ENCODE measurements at regions of chr1 and their contacts with region 1.

Region 1: DNA sequence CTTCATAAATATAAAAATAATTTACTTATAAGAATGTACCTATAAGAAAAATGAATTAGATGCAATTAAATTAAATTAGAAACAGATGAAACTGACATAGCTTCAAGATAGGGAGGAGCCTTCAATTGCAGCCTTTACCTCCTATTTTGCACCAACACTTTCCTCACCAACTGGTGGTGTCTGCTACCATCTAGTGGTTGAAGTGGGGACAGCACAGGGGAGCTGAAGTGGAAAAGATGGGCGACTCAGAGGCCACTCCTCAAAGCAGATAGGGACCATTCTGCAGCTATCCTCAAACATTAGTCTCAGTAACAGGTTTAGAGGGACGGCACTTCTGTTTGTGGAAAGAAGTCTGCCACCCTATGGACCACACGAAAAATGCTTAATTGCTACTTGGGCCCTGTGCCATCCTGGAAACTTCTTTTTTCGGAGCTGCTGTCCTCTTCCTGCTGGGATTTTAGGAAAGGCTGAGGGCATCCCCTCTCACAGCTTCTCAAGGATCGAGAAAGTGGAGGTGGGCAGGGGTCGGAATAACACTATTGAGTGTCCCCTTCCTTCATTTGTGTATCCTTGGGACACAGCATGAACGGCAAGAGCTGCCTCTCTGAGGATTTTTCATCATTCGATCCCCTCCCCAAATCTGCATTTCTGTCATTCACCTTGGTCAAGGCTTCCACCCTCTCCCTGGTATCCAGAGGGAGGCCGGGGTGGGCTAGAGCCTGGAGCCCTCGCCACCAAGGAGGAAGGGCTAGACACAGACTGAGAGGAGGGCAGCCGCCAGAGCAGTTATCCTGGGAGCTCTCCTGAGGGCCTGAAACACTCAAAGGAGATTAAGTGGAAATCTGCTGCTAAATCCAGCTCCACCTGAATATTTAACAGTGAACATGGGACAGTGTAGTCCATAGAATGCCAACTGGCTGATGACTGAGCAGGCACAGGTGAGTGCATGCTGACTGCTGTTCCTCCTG is 9.6 kb downstream of the PROK1 start:
- DNase-seq: peak; percentile 90
- ATAC-seq: peak; percentile 100
- H3K4me3 Mint-ChIP-seq: no peak overlapping the region
- H3K27ac Mint-ChIP-seq: no peak overlapping the region
- H3K4me1 Mint-ChIP-seq: no peaks in the 10 kb centered on the region
- H3K27me3 Mint-ChIP-seq: no peaks in the 10 kb centered on the region
- CTCF ChIP-seq: peak; percentile 89

Region 2: GRCh38 chr1:109370712-109371455 is 1089.7 kb before region 1 on chr1:
- CTCF ChIA-PET with region 1: no interaction called
- POLR2A ChIA-PET with region 1: no interaction called
- intact Hi-C with region 1: no loop called
- DNase-seq: no peak
- ATAC-seq: peak; percentile 31
- H3K4me3 Mint-ChIP-seq: no peak overlapping the region
- H3K27ac Mint-ChIP-seq: no peak overlapping the region
- H3K4me1 Mint-ChIP-seq: peaks cover 24% of the 10 kb centered on the region
- H3K27me3 Mint-ChIP-seq: peaks cover 16% of the 10 kb centered on the region
- CTCF ChIP-seq: no peak

Region 3: DNA sequence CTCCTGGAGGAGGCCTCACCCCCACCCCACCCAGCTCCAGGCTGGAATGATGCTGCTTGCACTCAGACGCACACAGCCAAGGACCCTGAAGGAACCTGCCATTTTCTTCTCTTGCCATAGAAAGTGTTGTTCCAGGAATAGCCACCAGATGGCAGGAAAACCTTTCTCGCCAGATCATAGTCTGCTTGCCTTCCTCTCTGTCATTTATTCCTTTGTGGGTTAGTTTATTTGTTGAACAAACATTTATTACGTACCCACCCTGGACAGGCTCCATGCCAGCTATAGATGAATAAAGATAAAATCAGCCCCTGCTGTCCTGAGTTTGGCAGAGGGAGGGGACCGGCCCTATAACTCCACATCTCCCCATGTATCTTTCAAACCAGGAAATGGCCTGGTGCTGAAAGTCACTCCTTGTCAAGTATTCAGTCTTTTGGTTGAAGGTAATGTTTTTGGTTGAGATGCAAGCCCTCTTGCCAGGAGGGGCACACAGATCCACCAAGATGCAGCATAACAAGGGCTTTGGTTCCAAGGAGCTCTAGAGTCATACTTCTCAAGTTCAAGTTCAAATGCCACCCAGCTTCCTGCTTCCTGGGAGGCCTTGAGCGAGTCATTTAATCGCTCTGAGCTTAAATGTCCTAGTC is 257.4 kb before region 1 on chr1:
- CTCF ChIA-PET with region 1: interaction called, 179 read pairs
- POLR2A ChIA-PET with region 1: interaction called, 4 read pairs
- intact Hi-C with region 1: loop called (anchors 2 kb)
- DNase-seq: peak; percentile 84
- ATAC-seq: peak; percentile 75
- H3K4me3 Mint-ChIP-seq: no peak overlapping the region
- H3K27ac Mint-ChIP-seq: peak overlapping the region; percentile 91
- H3K4me1 Mint-ChIP-seq: peaks cover 21% of the 10 kb centered on the region
- H3K27me3 Mint-ChIP-seq: no peaks in the 10 kb centered on the region
- CTCF ChIP-seq: peak; percentile 78

Region 4: DNA sequence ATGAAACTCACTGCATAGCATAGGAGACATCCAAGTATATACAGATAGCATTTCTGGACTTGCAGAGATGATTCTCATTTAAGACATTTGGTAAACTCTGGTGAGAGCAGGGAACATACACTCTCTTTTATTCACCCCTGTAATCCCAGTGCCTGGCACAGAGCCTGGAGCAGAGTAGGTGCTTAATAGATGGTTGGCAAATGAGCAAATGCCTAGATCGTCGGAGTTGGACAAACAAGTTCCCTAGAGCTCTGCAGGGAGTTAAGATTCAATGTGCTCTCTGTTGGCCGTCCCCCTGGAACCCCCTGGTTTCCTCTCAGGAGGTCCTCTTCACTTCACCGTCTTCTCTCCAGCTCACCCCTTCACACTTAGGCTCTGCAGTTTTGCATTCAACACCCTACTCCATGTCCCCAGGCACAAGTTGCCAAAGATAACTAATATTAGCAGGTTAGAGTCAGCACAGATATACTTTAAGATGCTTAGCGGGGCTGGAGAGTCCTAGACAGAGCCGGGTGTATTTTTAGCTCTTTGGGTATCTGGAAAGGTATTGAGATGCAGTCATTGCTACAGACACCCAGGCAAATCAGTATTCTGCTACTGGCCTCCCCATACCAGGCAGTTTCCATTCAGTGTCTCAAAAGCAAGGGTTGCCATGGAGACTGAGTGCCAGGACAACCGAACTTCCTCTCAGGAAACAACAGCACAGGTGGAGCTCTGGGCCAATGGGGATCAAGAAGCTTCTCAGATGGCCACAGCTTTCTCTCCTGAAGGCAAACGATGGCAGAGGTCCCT is 205.3 kb before region 1 on chr1:
- CTCF ChIA-PET with region 1: no interaction called
- POLR2A ChIA-PET with region 1: no interaction called
- intact Hi-C with region 1: no loop called
- DNase-seq: no peak
- ATAC-seq: peak; percentile 39
- H3K4me3 Mint-ChIP-seq: no peak overlapping the region
- H3K27ac Mint-ChIP-seq: no peak overlapping the region
- H3K4me1 Mint-ChIP-seq: no peaks in the 10 kb centered on the region
- H3K27me3 Mint-ChIP-seq: no peaks in the 10 kb centered on the region
- CTCF ChIP-seq: no peak

Region 5: DNA sequence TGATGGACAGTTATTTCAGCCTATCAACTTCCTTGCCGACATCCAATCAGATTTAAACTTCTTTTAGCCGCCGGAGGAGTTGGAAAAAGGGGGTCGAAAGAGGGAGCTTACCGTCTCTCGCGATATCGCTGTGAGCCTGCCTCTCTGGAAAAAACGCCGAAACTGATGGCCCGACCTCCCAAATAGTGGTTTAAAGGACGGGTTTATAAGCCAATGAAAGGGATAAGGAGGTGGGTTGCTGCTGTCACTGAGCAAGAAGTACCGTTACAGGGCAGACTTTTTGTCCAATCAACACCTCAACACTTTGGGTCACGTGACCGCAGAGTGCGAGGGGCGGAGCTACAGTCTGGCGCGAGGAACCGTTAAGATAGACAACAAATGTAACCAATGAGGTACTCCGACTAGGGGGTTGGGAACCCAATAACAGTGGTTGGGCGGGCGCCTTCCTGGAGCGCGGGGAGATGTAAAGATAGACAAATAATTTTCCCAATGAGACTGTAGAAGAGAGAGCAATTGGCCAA is 121.6 kb before region 1 on chr1 and contains the start of gene RBM15:
- CTCF ChIA-PET with region 1: interaction called, 16 read pairs
- POLR2A ChIA-PET with region 1: interaction called, 4 read pairs
- intact Hi-C with region 1: no loop called
- DNase-seq: peak; percentile 98
- ATAC-seq: peak; percentile 80
- H3K4me3 Mint-ChIP-seq: no peak within 1 kb of the TSS
- H3K27ac Mint-ChIP-seq: no peak within 1 kb of the TSS
- H3K4me1 Mint-ChIP-seq: peaks cover 49% of the 10 kb centered on the region
- H3K27me3 Mint-ChIP-seq: no peaks in the 10 kb centered on the region
- CTCF ChIP-seq: no peak
- total RNA-seq, gene RBM15: 70.8 to 72.5 TPM

Region 6: DNA sequence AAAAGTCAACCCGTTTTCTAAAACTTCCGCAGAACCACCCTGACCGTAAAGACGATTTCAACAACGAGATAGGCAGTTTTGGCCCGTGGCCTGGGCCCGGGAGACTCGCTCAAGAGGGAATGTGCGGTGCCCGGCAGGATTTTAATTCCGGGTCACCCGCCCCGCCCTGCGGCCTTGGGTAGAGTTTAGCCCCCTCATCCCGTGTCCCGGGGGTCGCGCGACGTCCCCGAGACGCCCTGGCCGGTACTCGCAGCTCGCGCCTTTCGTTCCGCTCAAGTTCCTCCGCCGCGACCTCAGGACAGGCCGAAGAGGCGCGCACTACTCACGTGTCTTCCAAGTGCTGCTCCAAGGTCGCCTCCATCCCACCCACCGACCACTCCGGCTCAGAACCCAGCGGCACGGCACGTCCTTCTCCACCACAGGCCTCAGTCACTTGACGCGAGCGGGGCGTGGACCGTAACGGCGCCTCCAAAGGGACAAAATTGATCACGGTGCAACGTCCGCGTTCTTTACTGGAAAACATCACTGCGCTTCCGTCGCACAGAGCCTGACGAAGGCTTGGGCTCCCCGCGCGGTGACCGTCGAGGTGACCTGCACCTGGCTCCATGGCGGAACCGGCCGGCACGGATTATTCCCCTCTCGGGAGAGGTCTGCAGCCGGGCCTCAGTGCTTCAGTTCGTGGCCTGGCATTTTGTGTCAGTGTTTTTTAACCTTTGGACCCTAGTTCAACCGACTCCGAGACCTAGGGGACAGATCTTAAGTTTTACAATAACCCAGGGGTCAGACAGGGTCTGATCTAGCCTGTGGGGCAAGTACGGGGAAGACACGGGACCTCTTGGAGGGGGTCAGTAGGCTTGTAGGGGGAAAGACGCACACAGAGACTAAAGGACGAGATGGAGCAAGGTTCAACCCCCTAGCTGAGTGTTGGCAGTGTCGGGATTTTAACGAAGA is 53.0 kb before region 1 on chr1 and contains the start of gene LAMTOR5:
- CTCF ChIA-PET with region 1: interaction called, 89 read pairs
- POLR2A ChIA-PET with region 1: interaction called, 4 read pairs
- intact Hi-C with region 1: loop called (anchors 5 kb)
- DNase-seq: peak; percentile 96
- ATAC-seq: peak; percentile 94
- H3K4me3 Mint-ChIP-seq: peak within 1 kb of the TSS; percentile 98
- H3K27ac Mint-ChIP-seq: peak within 1 kb of the TSS; percentile 100
- H3K4me1 Mint-ChIP-seq: peaks cover 19% of the 10 kb centered on the region
- H3K27me3 Mint-ChIP-seq: no peaks in the 10 kb centered on the region
- CTCF ChIP-seq: no peak
- total RNA-seq, gene LAMTOR5: 154 to 160 TPM

Region 7: DNA sequence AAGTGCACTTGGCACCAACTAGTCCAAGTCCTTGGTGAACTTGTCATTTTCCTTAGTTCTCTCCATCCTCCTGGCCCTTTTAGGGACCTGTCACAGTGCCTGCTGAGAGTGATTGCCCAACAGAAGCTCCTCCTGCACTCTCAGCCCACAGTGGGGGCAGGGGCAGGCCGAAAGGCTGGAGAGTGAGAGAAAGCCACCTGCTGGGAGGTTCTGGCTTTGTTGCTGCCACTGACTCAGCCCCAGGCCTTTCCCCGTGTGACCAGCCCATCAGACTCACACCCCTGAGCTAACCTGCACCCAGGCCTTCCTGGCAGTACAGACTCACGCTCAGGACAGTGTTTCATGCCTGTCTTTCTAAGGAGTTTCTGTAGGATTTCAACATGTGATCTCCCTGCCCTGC is 26.7 kb before region 1 on chr1:
- CTCF ChIA-PET with region 1: interaction called, 41 read pairs
- POLR2A ChIA-PET with region 1: no interaction called
- intact Hi-C with region 1: no loop called
- DNase-seq: peak; percentile 4
- ATAC-seq: no peak
- H3K4me3 Mint-ChIP-seq: no peak overlapping the region
- H3K27ac Mint-ChIP-seq: no peak overlapping the region
- H3K4me1 Mint-ChIP-seq: no peaks in the 10 kb centered on the region
- H3K27me3 Mint-ChIP-seq: peaks cover 4% of the 10 kb centered on the region
- CTCF ChIP-seq: no peak

Region 8: GRCh38 chr1:110482662-110483307 is 22.2 kb after region 1 on chr1:
- CTCF ChIA-PET with region 1: interaction called, 20 read pairs
- POLR2A ChIA-PET with region 1: no interaction called
- intact Hi-C with region 1: no loop called
- DNase-seq: peak; percentile 4
- ATAC-seq: no peak
- H3K4me3 Mint-ChIP-seq: no peak overlapping the region
- H3K27ac Mint-ChIP-seq: no peak overlapping the region
- H3K4me1 Mint-ChIP-seq: no peaks in the 10 kb centered on the region
- H3K27me3 Mint-ChIP-seq: peaks cover 8% of the 10 kb centered on the region
- CTCF ChIP-seq: no peak

Region 9: GRCh38 chr1:110513511-110513910 is 53.0 kb after region 1 on chr1:
- CTCF ChIA-PET with region 1: no interaction called
- POLR2A ChIA-PET with region 1: no interaction called
- intact Hi-C with region 1: no loop called
- DNase-seq: no peak
- ATAC-seq: peak; percentile 37
- H3K4me3 Mint-ChIP-seq: no peak overlapping the region
- H3K27ac Mint-ChIP-seq: no peak overlapping the region
- H3K4me1 Mint-ChIP-seq: no peaks in the 10 kb centered on the region
- H3K27me3 Mint-ChIP-seq: peaks cover 2% of the 10 kb centered on the region
- CTCF ChIP-seq: no peak

Region 10: DNA sequence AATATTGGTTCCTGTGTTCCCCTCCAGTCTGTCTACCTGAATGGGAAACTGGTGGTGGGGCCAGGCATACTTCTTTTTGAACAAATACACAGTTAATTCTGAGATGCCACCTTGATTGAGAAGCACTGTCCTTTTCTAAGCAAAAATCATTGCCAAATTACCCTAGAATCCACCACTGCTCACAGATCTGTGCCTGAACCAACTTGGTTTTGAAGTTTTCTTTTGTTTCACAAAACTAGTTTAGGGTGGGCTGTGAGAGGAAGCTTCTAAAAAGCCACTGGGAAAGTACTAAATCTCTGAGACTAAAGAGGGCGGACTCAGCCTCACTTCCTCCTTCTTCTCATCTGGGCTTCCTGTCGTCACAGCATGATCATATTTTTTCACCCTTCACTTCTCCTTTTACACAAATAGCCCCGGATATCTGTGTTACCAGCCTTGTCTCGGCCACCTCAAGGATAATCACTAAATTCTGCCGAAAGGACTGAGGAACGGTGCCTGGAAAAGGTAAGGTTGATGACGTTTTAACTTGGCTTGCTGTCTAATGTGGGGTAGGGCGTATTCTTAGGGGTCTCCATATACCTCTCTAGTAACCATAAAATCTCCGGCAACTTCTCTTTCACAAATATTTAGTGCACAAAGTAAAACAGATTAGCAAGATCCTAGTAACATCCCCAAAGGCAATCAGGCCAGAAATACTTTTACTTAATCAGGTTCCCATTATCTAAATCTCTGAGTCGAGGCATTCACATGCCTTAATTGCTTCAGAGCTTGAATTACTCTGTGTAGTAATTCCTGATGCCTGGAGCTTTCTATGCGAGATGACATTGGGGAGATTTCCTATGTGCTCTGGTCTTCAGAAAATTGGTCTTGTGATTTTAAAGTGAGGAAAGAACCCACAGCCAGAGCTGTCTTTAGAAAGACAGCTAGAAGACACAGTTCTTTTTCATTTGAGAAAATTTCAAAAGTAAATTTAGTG is 412.5 kb after region 1 on chr1 and contains the start of gene CD53:
- CTCF ChIA-PET with region 1: no interaction called
- POLR2A ChIA-PET with region 1: no interaction called
- intact Hi-C with region 1: no loop called
- DNase-seq: peak; percentile 71
- ATAC-seq: peak; percentile 35
- H3K4me3 Mint-ChIP-seq: peak within 1 kb of the TSS; percentile 91
- H3K27ac Mint-ChIP-seq: peak within 1 kb of the TSS; percentile 99
- H3K4me1 Mint-ChIP-seq: peaks cover 31% of the 10 kb centered on the region
- H3K27me3 Mint-ChIP-seq: no peaks in the 10 kb centered on the region
- CTCF ChIP-seq: no peak
- total RNA-seq, gene CD53: 251 to 257 TPM

Measured in activated CD8-positive, alpha-beta T cell treated with anti-CD3 and anti-CD28 coated beads for 36 hours (primary cell).